Activated CD8-positive, alpha-beta T cell treated with anti-CD3 and anti-CD28 coated beads for 36 hours (primary cell): ENCODE measurements at regions of chr1 and their contacts with region 1.

Region 1: DNA sequence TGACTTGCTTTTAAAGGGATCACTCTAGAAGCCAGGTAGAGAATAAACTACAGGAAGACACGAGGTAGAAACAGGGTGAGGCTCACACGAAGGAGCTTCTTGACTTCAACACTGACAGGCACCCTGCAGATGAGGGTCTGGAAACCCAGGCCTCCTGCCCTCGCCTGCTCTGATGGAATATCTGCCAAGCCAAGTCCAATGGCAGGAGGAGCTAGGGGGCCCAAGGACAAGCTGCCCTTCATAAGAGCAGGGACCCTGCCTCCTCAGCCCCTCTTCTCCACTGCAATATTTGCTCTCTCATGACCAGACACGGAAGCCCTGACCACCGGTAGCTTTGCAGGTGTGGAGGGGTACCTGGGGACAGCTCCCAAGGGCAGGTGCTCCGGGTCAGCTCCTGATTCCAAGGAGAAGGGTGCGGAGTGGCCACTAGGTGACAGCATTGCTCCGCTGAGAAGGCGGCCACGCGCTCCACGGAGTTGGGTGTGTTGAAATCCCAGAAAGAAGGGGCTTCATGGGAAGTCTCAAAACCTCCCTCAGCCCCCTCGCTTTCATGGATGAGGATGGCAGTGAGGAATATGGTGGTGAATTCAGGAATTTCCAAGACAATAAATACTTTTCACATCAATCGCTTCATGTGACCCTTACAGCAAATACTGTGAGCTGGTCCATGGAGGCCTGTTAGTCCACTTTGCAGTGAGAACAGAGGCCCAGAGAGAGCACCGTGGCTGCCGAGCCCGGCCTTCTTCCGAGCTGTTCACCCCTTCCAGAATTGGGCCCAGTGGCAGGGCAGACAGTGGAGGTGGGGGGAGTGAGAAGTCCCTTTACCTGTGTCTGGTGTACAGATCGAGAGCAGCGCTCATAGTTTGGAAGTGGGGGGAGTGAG is 33.2 kb upstream of the PAX7 start:
- DNase-seq: peak; percentile 67
- ATAC-seq: peak; percentile 66
- H3K4me3 Mint-ChIP-seq: no peak overlapping the region
- H3K27ac Mint-ChIP-seq: no peak overlapping the region
- H3K4me1 Mint-ChIP-seq: no peaks in the 10 kb centered on the region
- H3K27me3 Mint-ChIP-seq: peaks cover 23% of the 10 kb centered on the region
- CTCF ChIP-seq: peak; percentile 90

Region 2: DNA sequence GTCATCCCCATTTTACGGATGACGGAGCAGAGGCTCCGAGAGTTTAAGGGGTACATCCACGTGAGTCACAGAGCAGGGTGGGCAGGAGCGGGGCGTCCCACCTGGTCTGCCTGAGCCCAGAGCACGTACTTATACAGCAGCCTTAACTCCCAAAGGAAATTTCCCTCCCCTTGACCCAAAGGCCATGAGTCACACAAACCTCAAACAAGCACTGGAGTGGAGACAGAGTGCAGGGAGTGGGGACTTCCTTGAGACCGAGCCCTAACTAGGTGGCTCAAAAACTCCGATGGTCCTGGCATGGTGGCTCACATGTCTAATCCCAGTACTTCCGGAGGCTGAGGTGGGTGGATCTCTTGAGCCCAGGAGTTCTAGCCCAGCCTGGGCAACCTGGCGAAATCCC is 258.2 kb before region 1 on chr1:
- CTCF ChIA-PET with region 1: no interaction called
- POLR2A ChIA-PET with region 1: no interaction called
- intact Hi-C with region 1: no loop called
- DNase-seq: no peak
- ATAC-seq: no peak
- H3K4me3 Mint-ChIP-seq: no peak overlapping the region
- H3K27ac Mint-ChIP-seq: no peak overlapping the region
- H3K4me1 Mint-ChIP-seq: no peaks in the 10 kb centered on the region
- H3K27me3 Mint-ChIP-seq: peaks cover 5% of the 10 kb centered on the region
- CTCF ChIP-seq: no peak

Region 3: GRCh38 chr1:18575620-18576019 is 21.8 kb before region 1 on chr1:
- CTCF ChIA-PET with region 1: interaction called, 34 read pairs
- POLR2A ChIA-PET with region 1: no interaction called
- intact Hi-C with region 1: no loop called
- DNase-seq: peak; percentile 65
- ATAC-seq: peak; percentile 73
- H3K4me3 Mint-ChIP-seq: no peak overlapping the region
- H3K27ac Mint-ChIP-seq: no peak overlapping the region
- H3K4me1 Mint-ChIP-seq: no peaks in the 10 kb centered on the region
- H3K27me3 Mint-ChIP-seq: peaks cover 2% of the 10 kb centered on the region
- CTCF ChIP-seq: peak; percentile 46

Region 4: DNA sequence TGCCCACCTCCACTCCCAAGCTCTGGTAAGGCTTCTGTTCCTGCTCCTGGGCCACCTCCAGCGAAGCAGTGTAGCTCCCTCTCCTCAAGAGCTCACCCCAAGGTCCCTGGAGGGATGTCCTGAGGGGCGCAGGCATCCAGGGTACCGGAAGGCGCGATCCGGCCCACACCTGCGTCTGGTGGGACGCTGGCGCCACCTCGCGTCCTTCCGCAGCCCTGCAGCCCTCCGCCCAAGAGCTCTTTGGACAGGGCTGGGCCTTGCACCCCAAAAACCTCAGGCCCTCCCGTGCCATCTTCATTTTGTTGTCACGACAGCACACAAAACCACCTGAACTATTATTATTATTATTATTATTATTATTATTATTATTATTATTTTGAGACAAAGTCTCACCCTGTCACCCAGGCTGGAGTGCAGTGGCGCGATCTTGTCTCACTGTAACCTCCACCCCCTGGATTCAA is 16.0 kb before region 1 on chr1:
- CTCF ChIA-PET with region 1: interaction called, 34 read pairs
- POLR2A ChIA-PET with region 1: interaction called, 5 read pairs
- intact Hi-C with region 1: no loop called
- DNase-seq: peak; percentile 67
- ATAC-seq: peak; percentile 88
- H3K4me3 Mint-ChIP-seq: no peak overlapping the region
- H3K27ac Mint-ChIP-seq: no peak overlapping the region
- H3K4me1 Mint-ChIP-seq: no peaks in the 10 kb centered on the region
- H3K27me3 Mint-ChIP-seq: peaks cover 8% of the 10 kb centered on the region
- CTCF ChIP-seq: peak; percentile 94

Region 5: DNA sequence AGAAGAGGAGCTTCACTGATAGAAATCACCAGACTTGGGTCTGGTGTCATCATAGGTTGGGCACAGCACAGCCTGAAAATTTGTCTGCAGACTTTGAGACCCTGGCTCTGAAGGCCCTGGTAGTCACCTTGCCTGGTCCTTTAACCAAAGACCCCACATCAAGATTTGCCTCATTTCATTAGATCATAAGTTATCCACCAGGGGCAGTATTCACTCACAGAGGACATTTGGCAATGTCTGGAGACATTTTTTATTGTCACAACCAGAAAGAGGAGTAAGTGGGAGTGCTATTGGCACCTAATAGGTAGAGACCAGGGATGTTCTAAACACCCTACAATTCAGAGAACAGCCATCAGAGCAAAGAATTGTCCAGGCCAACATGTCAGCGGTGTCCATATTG is 11.1 kb after region 1 on chr1:
- CTCF ChIA-PET with region 1: interaction called, 15 read pairs
- POLR2A ChIA-PET with region 1: no interaction called
- intact Hi-C with region 1: no loop called
- DNase-seq: no peak
- ATAC-seq: no peak
- H3K4me3 Mint-ChIP-seq: no peak overlapping the region
- H3K27ac Mint-ChIP-seq: no peak overlapping the region
- H3K4me1 Mint-ChIP-seq: no peaks in the 10 kb centered on the region
- H3K27me3 Mint-ChIP-seq: no peaks in the 10 kb centered on the region
- CTCF ChIP-seq: no peak

Region 6: GRCh38 chr1:18628511-18628910 is 31.1 kb after region 1 on chr1:
- CTCF ChIA-PET with region 1: no interaction called
- POLR2A ChIA-PET with region 1: no interaction called
- intact Hi-C with region 1: no loop called
- DNase-seq: no peak
- ATAC-seq: no peak
- H3K4me3 Mint-ChIP-seq: no peak overlapping the region
- H3K27ac Mint-ChIP-seq: no peak overlapping the region
- H3K4me1 Mint-ChIP-seq: peaks cover 9% of the 10 kb centered on the region
- H3K27me3 Mint-ChIP-seq: peaks cover 79% of the 10 kb centered on the region
- CTCF ChIP-seq: no peak

Region 7: GRCh38 chr1:18676332-18676781 is 79.0 kb after region 1 on chr1:
- CTCF ChIA-PET with region 1: interaction called, 73 read pairs
- POLR2A ChIA-PET with region 1: no interaction called
- intact Hi-C with region 1: loop called (anchors 5 kb)
- DNase-seq: peak; percentile 39
- ATAC-seq: peak; percentile 55
- H3K4me3 Mint-ChIP-seq: no peak overlapping the region
- H3K27ac Mint-ChIP-seq: no peak overlapping the region
- H3K4me1 Mint-ChIP-seq: peaks cover 15% of the 10 kb centered on the region
- H3K27me3 Mint-ChIP-seq: peaks cover 5% of the 10 kb centered on the region
- CTCF ChIP-seq: no peak

Region 8: DNA sequence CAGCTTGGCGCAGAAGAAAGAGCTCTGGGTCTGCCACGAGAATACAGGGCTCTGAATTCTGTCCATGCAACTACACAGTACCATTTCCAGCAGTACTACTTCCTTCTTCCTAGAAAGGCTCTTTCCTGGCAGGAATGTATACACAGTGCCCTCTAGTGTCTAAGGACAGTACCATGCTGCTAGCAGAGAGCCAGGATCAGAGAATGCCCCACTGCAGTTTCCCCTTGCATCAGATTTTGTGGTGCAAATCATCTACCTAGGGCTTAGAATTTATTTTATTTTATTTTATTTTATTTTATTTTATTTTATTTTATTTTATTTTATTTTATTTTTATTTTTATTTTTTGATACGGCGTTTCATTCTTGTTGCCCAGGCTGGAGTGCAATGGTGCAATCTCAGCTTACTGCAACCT is 84.0 kb after region 1 on chr1:
- CTCF ChIA-PET with region 1: interaction called, 73 read pairs
- POLR2A ChIA-PET with region 1: no interaction called
- intact Hi-C with region 1: loop called (anchors 5 kb)
- DNase-seq: peak; percentile 11
- ATAC-seq: no peak
- H3K4me3 Mint-ChIP-seq: no peak overlapping the region
- H3K27ac Mint-ChIP-seq: no peak overlapping the region
- H3K4me1 Mint-ChIP-seq: peaks cover 3% of the 10 kb centered on the region
- H3K27me3 Mint-ChIP-seq: peaks cover 3% of the 10 kb centered on the region
- CTCF ChIP-seq: peak; percentile 81

Region 9: GRCh38 chr1:18820791-18821641 is 223.6 kb after region 1 on chr1:
- CTCF ChIA-PET with region 1: interaction called, 23 read pairs
- POLR2A ChIA-PET with region 1: no interaction called
- intact Hi-C with region 1: loop called (anchors 2 kb)
- DNase-seq: peak; percentile 74
- ATAC-seq: peak; percentile 81
- H3K4me3 Mint-ChIP-seq: no peak overlapping the region
- H3K27ac Mint-ChIP-seq: no peak overlapping the region
- H3K4me1 Mint-ChIP-seq: no peaks in the 10 kb centered on the region
- H3K27me3 Mint-ChIP-seq: peaks cover 29% of the 10 kb centered on the region
- CTCF ChIP-seq: peak; percentile 96